A549 (cell line): ENCODE measurements at regions of chr4 and their contacts with region 1.

Region 1: GRCh38 chr4:152500800-152501434 is 35.0 kb downstream of the FBXW7 start:
- DNase-seq: peak; percentile 30 to 86
- ATAC-seq: peak; percentile 66 to 84; a peak in 4 of 6 replicates
- H3K4me3 ChIP-seq: no peak overlapping the region
- H3K27ac ChIP-seq: no peak overlapping the region
- H3K4me1 ChIP-seq: peaks cover 12% of the 10 kb centered on the region; the same call in 2 of the 3 replicates
- CTCF ChIP-seq: peak; percentile 68
- EP300 ChIP-seq: no peak
- POLR2A ChIP-seq: no peak
- RAD21 ChIP-seq: peak; percentile 62 to 64

Region 2: GRCh38 chr4:152485726-152486276 is 15.1 kb before region 1 on chr4:
- CTCF ChIA-PET with region 1: interaction called, 17 read pairs
- POLR2A ChIA-PET with region 1: no interaction called
- DNase-seq: peak; percentile 16 to 91
- ATAC-seq: peak; percentile 100
- H3K4me3 ChIP-seq: peak overlapping the region; percentile 36
- H3K27ac ChIP-seq: peak overlapping the region; percentile 64 to 83
- H3K4me1 ChIP-seq: peaks cover 48% of the 10 kb centered on the region
- CTCF ChIP-seq: no peak
- EP300 ChIP-seq: peak; percentile 37 to 41; a peak in 2 of 5 replicates
- POLR2A ChIP-seq: no peak
- RAD21 ChIP-seq: no peak

Region 3: DNA sequence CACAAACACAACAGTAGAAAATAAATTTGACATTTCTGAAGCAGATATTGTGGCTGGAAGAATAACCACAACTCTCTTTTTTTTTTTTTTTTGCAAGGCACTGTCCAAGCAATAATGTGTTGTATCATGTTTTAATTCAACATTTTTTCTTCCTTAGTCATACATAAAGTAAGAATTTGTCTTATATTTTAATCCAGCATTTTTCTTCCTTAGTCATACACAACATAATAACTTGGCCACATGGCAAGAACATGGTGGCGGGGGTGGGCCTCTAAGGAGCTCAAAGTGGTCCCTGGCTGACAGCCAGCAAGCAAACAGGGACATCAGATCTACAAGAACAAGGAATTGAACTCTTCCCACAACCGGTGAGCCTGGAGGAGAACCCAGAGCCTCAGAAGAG is 14.8 kb after region 1 on chr4:
- CTCF ChIA-PET with region 1: interaction called, 37 read pairs
- POLR2A ChIA-PET with region 1: no interaction called
- DNase-seq: no peak
- ATAC-seq: no peak
- H3K4me3 ChIP-seq: no peak overlapping the region
- H3K27ac ChIP-seq: no peak overlapping the region
- H3K4me1 ChIP-seq: peaks cover 9% of the 10 kb centered on the region
- CTCF ChIP-seq: no peak
- EP300 ChIP-seq: no peak
- POLR2A ChIP-seq: no peak
- RAD21 ChIP-seq: no peak

Region 4: DNA sequence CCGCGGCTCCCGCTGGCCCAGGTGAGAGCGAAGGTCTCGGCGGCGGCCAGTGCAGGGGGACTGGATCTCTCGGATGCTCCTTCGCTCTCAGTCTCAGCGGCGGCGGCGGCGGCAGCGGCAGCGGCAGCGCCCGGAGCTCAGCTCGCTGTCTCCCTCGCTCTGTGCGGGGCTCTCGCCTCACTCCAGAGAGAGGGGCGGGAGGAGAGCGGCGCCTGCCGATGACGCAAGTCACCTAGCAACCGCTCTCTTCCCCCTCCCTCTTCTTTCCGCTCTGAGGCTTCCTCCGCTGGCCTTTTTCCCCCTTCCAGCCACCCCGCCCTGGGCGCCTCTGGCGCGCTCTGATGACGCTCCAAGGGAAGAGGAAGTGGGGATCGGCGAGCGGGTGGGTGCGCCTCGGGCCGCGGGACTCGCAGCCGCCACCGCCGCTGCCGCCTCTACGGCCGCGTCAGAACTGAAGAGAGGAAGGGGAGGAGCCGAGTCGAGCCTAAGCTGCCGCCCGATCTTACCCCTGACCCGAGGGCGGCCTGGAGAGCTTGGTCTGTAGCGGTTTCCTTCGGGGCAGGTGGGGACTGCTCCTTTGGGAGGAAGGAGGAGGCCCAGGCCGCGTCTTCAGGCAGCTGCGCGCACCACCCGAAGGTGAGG is 35.1 kb after region 1 on chr4 and contains the start of gene FBXW7:
- CTCF ChIA-PET with region 1: interaction called, 8 read pairs
- POLR2A ChIA-PET with region 1: interaction called, 10 read pairs
- DNase-seq: peak; percentile 87 to 96
- ATAC-seq: peak; percentile 94 to 95
- H3K4me3 ChIP-seq: peak within 1 kb of the TSS; percentile 93
- H3K27ac ChIP-seq: peak within 1 kb of the TSS; percentile 78 to 96
- H3K4me1 ChIP-seq: peaks cover 19% of the 10 kb centered on the region
- CTCF ChIP-seq: no peak
- EP300 ChIP-seq: no peak
- POLR2A ChIP-seq: peak; percentile 62
- RAD21 ChIP-seq: no peak; a peak in 1 of 5 replicates
- polyA plus RNA-seq, gene FBXW7: 9.2 and 12.5 TPM in 2 replicates

Region 5: DNA sequence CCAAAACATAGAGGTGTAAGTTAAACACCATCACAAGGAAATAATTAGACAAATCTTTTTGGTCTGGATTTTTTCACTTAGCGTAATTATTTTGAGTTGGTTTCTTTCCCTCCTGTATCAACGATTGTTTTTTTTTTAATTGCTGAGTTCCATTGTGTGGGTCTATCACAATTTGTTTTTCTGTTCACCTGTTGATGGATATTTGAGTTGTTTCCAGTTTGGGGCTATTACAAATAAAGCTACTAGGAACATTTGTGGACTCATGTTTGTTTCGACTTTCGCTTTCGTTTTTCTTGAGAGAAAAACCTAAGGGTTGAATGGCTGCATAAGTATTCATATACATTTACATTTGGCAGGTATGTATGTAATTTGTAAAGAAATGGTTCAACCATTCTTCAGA is 55.4 kb after region 1 on chr4:
- CTCF ChIA-PET with region 1: no interaction called
- POLR2A ChIA-PET with region 1: no interaction called
- DNase-seq: no peak
- ATAC-seq: no peak
- H3K4me3 ChIP-seq: no peak overlapping the region
- H3K27ac ChIP-seq: no peak overlapping the region
- H3K4me1 ChIP-seq: no peaks in the 10 kb centered on the region
- CTCF ChIP-seq: no peak
- EP300 ChIP-seq: no peak
- POLR2A ChIP-seq: no peak
- RAD21 ChIP-seq: no peak